ENCODE measurements at regions of chr1 and their contacts with region 1.

Region 1: DNA sequence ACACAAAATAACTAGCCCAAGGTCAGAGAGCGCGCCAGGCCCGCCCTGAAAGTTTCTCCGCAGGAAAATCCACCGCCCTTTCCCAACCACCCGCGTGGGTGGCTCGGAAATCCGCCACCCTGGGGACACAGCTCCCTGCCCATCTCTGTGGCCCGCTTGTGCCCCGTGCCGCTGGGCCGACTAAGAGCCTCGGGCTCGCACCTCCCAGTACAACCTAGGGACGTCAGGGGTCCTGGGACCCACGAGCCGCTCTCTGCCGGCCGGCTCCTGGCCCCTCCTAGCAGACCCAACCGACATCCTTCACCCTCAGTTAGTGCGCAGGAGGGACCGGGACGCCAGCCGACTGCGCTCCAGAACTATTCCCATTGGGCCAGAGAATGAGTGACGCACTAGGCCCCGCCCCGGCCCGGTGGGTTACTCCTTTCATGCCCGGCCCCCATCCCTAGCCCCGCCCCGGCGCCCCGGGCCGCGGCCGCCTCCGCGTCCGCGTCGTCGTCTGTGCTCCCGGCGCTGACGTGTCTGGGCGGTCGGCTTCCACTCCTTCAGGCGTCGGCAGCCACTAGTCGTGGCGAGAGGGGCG is 395 bp upstream of the UAP1 start:
- DNase-seq: peak; percentile 97 to 99 (median 98)
- ATAC-seq: peak; percentile 90
- H3K4me3 ChIP-seq: peak overlapping the region; percentile 84
- H3K27ac ChIP-seq: peak overlapping the region; percentile 83
- H3K4me1 ChIP-seq: peaks cover 19 to 21% of the 10 kb centered on the region in 2 experiments; a peak in 4 of 5 replicates
- H3K27me3 ChIP-seq: no peaks in the 10 kb centered on the region
- CTCF ChIP-seq: no peak
- EP300 ChIP-seq: no peak; the same call in 1 of the 2 replicates
- POLR2A ChIP-seq: peak; percentile 89
- RAD21 ChIP-seq: no peak

Region 2: GRCh38 chr1:162357681-162358266 is 203.4 kb before region 1 on chr1:
- CTCF ChIA-PET with region 1: no interaction called
- POLR2A ChIA-PET with region 1: no interaction called
- in situ Hi-C with region 1: no loop called
- intact Hi-C with region 1: loop called (anchors 1 kb)
- DNase-seq: peak; percentile 65 to 84 (median 72)
- ATAC-seq: peak; percentile 87
- H3K4me3 ChIP-seq: no peak overlapping the region
- H3K27ac ChIP-seq: no peak overlapping the region; the same call in 1 of the 3 replicates
- H3K4me1 ChIP-seq: peaks cover 9 to 33% of the 10 kb centered on the region in 2 experiments; a peak in 4 of 5 replicates
- H3K27me3 ChIP-seq: no peaks in the 10 kb centered on the region
- CTCF ChIP-seq: peak; percentile 74 to 89 (median 76)
- EP300 ChIP-seq: no peak
- POLR2A ChIP-seq: no peak
- RAD21 ChIP-seq: peak; percentile 74 to 88

Region 3: DNA sequence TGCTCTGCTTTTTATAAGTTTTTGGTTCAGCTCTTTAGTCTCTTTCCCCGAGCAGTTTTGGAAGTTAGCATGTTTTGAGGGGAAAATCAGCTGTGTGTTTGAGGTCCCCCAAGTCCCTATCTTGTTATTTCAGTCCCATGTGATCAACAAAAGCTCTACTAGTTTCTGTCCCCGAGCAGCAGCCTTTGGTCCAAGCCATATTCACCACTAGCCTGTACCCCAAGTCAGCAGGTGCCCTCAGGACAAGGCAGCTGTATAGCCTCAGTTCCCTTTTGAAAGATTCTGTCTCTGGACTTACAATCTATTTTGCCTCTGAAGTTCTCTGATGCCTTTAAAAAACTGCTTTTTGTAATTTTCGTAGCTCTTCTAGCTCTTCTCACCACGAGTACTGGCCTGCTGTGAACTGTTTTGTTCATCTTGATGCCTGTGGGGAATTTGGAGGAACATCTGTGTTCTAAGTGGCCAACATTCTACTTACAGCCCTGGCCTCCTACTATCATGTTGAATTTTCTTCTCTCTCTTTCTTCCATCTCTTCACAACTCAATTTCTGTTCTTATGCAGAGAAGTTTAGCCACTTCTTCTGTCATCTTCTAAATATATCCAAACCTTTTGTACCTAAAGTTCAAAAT is 17.1 kb after region 1 on chr1:
- CTCF ChIA-PET with region 1: no interaction called
- POLR2A ChIA-PET with region 1: interaction called, 35 read pairs
- in situ Hi-C with region 1: no loop called
- intact Hi-C with region 1: no loop called
- DNase-seq: no peak
- ATAC-seq: no peak
- H3K4me3 ChIP-seq: no peak overlapping the region
- H3K27ac ChIP-seq: no peak overlapping the region
- H3K4me1 ChIP-seq: no peaks in the 10 kb centered on the region
- H3K27me3 ChIP-seq: no peaks in the 10 kb centered on the region
- CTCF ChIP-seq: no peak
- EP300 ChIP-seq: no peak
- POLR2A ChIP-seq: no peak
- RAD21 ChIP-seq: no peak